Left cardiac atrium (tissue), 4 donors: ENCODE measurements at regions of chr3 and their contacts with region 1.

Region 1: DNA sequence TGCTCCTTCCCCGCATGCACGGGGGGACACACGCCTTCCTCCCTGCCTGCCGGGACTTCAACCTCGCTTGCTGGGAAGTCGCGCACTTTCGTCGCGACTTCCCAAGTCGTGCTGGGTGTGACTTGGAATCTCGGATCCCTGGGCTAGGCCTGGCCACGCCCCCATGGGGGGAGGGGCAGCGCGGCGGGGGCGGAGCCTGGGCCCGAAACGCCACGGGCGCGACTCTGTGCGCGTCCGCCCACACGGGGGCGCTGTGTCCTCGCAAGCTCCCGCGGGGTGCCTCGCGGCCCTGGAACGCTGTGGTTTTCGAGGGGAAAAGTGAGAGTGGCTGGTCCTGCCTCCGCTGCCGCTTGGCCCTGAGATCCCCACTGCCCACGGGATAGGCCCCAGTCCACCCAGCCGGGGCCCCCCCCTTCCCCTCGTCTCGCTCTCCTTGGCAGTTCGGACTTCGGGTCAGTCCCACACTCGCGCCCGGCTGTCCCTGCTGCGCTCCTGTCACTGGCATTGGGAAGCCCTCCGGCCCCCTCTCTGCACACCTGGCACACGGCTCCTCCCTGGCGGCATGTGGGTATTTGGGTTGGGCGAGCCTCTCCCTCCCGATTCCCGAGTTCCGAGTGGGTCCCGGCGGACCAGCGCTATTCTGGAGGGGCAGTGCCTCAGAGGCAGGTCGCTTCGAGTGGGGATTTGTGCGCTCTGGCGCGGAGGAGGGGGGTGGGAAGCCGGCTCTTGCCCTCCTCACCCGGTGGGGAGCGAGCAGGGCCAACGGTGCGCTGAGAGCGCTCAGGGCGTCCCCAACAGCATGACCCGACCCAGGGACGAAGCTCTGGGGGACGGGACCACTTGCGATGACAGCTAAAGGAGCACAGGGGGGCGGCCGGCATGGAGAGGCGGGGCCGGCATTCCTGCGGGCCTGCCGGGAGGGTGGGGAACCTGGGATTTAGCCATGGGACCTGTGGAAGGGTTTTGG is 23.6 kb downstream of the SEC61A1 start:
- DNase-seq: peak; percentile 90
- ATAC-seq: peak; percentile 85 to 92

Region 2: DNA sequence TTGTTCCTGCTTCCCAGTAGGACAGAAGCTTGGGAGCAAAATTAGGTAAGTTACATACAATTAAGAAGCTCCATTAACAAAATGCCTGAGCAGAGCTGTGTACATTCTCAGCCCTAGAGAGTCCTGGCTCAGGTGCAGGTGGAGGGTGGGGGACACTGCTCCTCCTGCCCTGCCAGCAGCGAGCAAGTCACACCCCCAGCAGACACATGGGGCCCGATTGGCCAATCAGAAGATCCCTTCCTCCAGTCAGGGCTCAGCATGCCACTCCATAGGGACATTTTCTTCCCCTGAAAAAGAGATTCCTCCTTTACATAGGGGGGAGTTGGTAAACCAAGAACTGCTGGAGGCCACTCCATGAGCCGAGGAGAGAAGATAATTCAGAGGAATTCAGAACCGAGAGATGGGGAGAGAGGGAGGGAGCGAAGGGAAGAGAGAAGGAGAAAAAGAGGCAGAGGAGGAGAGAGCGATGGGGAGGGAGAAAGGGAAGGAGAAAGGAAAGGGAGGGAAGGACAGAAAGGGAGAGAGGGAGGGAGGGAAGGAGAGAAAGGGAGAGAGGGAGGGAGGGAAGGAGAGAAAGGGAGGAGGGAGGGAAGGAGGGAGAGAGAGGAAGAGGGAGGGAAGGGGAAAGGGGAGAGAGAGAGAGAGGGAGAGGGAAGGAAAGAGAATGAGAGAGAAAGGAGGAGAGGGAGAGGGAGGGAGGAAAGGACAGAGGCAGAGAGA is 1030.6 kb before region 1 on chr3:
- intact Hi-C with region 1: no loop called
- DNase-seq: peak; percentile 17
- ATAC-seq: peak in 1 of 2 donors; percentile 54

Region 3: DNA sequence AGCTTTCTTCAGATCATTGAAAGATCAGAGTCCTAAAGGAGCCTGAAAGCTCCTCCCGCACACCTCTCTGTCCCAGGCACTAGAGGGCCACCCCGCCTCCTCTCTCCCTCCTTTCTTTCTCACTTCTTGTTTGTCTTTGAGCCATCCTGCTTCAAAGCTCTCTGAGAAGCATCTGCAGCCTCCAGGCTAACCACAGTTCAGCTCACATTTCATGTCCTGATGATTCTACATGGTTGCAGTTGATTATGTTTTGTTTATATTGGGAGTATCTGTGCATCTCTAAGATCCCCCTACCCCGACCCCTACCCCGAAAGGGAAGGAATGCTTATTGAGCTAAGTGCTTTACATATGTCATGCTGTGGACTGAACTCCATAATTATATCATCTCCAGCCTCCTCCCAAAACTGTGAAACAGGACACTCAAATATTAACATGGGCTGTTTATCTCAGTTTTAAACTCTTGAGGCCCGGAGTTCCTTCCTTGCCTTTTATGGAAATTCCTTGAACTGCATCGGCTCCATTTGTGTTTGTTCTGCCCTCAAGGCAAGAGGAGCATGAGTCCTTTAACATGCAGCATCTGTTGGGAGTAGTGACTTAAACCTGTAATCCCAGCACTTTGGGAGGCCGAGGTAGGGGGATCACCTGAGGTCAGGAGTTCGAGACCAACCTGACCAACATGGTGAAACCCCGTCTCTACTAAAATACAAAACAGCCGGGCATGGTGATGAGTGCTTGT is 284.4 kb before region 1 on chr3:
- intact Hi-C with region 1: no loop called
- DNase-seq: no peak
- ATAC-seq: no peak

Region 4: GRCh38 chr3:128123538-128124368 is 48.0 kb after region 1 on chr3 and contains the start of gene RUVBL1:
- intact Hi-C with region 1: loop called in 1 of 2 experiments (anchors 10 kb)
- DNase-seq: peak; percentile 99
- ATAC-seq: peak; percentile 100
- total RNA-seq, gene RUVBL1: 22.1 to 23.7 TPM

Region 5: DNA sequence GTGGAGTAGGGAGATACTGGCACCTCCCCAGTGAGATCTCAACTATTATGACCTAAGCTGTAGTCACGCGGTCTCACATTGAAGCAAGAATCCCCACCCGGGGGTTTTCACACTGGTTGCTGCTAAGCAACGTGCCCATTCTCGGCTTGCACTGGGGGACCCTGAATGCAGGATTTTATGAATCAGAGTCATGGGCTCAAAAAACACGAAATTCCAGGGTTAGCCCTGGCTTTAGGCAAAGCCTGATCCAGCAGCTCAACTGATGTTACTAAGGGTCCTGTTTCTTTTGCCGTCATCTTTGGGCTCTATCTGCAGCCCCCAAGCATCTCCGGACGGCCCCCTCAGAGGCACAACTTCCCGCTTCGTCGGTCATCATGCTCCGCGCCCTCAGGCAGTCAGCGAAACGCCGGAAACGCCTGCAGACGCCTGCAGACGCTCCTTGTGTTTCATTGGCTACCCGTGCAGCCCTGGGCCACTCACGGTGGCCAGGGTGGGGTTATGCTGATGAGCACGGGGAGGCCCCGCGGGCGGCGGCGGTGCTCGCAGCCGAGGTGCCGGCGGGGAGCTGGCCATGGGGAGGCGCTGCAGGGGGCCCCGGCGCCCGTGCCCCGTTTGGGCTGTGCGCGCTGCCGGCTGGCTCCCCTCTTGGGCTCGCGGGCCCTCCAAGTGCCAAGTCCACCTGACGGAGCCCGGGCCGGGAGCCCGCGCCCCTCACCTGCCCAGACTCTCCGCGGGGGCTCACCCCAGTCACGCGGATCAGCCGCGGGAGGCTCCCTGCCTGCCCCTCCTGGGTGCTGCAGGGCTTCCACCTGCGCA is 951.1 kb after region 1 on chr3:
- intact Hi-C with region 1: no loop called
- DNase-seq: peak; percentile 93
- ATAC-seq: peak; percentile 95 to 96